Posterior vena cava (tissue), 2 donors: ENCODE measurements at regions of chrX and their contacts with region 1.

Region 1: DNA sequence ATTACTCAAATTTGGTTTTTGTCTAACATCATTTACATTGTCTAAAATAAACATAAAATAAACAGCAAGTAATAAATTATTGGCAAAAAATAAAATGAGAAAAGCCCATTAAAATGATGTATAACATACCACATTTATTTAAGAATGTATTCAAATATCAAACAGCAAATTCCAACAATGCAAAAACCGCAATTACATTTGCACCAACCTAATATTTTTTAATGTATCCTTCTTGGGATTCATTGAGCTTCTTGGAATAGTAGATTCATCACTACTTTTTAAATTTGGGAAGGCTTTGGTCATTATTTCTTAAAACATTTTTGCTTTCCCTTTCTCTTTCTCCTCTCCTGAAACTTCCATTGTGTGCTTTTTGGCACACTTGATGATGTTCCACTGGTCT is 400.2 kb downstream of the MAGEE1 start:
- DNase-seq: no peak

Region 2: DNA sequence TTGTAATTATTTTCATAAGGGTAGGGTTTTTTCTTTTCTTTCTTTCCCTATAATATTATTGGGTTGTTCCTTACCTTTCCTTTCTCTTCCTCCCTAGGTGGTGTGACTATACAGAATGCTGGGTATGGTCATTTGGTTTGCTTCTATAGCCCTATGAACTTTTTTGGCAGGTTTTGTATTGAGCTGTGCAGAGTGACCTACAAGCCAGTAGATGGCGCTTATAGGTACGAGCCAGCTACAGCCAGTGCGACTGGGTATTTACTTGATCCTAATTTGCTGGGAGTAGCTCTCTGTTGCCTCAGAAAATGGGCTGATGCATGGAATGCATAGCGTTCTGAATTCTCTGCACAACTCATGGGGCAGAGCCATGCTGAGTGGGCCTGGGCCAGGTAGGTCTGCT is 23.2 kb after region 1 on chrX:
- intact Hi-C with region 1: loop called in 1 of 2 experiments (anchors 1 kb)
- DNase-seq: no peak